Activated CD4-positive, alpha-beta memory T cell treated with anti-CD3 and anti-CD28 coated beads for 36 hours (primary cell): ENCODE measurements at regions of chr20 and their contacts with region 1.

Region 1: DNA sequence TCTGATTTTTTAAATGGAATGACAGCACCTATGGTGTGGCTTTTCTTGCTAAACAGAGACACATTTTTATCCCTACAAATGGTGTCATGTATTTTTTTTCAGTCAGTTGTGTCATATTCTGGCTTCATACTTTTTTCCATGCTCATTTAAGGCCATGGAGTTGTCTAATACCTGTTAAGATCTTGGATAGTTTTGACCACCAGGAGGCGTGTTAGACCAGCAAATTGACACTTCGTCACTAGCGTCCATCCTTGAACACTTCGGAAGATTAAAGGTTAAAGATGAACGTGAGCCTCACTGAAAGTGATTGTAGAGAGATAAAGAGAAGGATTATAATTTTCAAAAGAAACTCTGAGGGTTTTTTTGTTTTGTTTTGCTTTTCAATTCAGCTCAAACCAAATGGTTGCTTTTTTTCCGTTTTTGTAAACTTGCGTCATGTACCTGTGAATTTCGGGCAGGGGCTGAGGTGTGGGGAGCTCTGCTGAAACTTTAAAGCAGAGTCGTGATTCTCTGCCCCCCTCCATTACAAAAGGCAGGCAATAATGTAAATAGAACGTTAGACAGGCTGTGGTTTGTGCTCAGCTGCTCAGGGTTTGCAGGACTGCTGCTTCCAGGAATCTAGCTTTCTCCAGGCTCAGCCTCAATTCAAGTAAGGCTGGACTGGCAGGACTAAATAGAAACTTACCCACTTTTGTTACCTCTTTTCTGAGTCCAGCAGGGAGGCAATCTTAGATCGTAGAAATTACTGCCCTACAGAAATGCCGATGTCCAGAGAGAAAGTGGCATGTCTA is 245.1 kb downstream of the FOXA2 start:
- DNase-seq: peak; percentile 25
- H3K4me3 Mint-ChIP-seq: no peak overlapping the region
- H3K27ac Mint-ChIP-seq: no peak overlapping the region
- H3K4me1 Mint-ChIP-seq: peaks cover 2% of the 10 kb centered on the region
- H3K27me3 Mint-ChIP-seq: no peaks in the 10 kb centered on the region

Region 2: DNA sequence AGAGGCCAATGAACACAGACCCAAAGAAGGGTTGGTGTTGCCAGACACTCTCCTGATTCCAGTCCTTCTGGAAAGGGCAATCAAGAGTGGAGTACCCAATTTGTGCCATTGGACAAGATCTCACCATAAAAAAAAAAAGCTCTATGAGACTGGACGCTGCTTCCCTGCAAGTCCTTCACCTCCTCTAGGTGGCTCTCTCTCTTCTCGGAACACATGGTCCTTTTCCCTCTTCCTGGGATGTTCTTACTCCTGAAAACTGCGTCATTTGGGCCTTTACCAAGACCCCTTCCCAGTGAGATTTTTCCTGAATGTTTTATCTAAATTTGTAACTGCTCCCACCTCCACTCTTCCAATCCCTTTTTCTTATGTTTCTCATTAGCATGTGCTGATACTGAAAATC is 35.8 kb before region 1 on chr20:
- CTCF ChIA-PET with region 1: no interaction called
- POLR2A ChIA-PET with region 1: no interaction called
- intact Hi-C with region 1: no loop called
- DNase-seq: no peak
- H3K4me3 Mint-ChIP-seq: no peak overlapping the region
- H3K27ac Mint-ChIP-seq: no peak overlapping the region
- H3K4me1 Mint-ChIP-seq: no peaks in the 10 kb centered on the region
- H3K27me3 Mint-ChIP-seq: no peaks in the 10 kb centered on the region

Region 3: DNA sequence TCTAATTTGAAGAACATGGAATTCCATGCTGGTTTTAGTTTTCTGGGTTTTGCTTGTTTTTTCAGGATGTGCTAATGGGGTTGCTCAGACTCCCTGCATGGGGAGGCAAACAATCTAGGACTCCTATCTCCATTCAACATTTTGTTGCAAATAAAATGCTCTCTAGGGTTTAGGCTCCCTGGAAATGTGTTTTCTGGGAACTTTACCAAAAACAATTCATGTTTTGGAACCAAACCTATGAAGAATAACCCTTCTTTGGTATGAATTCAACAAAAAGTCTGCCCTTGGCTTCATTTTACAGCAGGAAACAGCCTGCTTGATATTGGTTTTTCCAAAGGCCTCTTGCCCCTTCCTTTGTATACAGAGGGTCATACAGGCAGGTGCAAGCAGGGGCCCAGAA is 27.3 kb after region 1 on chr20:
- CTCF ChIA-PET with region 1: no interaction called
- POLR2A ChIA-PET with region 1: no interaction called
- intact Hi-C with region 1: no loop called
- DNase-seq: no peak
- H3K4me3 Mint-ChIP-seq: no peak overlapping the region
- H3K27ac Mint-ChIP-seq: no peak overlapping the region
- H3K4me1 Mint-ChIP-seq: no peaks in the 10 kb centered on the region
- H3K27me3 Mint-ChIP-seq: no peaks in the 10 kb centered on the region

Region 4: GRCh38 chr20:22385602-22386305 is 46.5 kb after region 1 on chr20:
- CTCF ChIA-PET with region 1: no interaction called
- POLR2A ChIA-PET with region 1: no interaction called
- intact Hi-C with region 1: no loop called
- DNase-seq: no peak
- H3K4me3 Mint-ChIP-seq: no peak overlapping the region
- H3K27ac Mint-ChIP-seq: no peak overlapping the region
- H3K4me1 Mint-ChIP-seq: no peaks in the 10 kb centered on the region
- H3K27me3 Mint-ChIP-seq: no peaks in the 10 kb centered on the region

Region 5: GRCh38 chr20:22430154-22430745 is 91.0 kb after region 1 on chr20:
- CTCF ChIA-PET with region 1: no interaction called
- POLR2A ChIA-PET with region 1: no interaction called
- intact Hi-C with region 1: no loop called
- DNase-seq: no peak
- H3K4me3 Mint-ChIP-seq: no peak overlapping the region
- H3K27ac Mint-ChIP-seq: no peak overlapping the region
- H3K4me1 Mint-ChIP-seq: no peaks in the 10 kb centered on the region
- H3K27me3 Mint-ChIP-seq: no peaks in the 10 kb centered on the region

Region 6: DNA sequence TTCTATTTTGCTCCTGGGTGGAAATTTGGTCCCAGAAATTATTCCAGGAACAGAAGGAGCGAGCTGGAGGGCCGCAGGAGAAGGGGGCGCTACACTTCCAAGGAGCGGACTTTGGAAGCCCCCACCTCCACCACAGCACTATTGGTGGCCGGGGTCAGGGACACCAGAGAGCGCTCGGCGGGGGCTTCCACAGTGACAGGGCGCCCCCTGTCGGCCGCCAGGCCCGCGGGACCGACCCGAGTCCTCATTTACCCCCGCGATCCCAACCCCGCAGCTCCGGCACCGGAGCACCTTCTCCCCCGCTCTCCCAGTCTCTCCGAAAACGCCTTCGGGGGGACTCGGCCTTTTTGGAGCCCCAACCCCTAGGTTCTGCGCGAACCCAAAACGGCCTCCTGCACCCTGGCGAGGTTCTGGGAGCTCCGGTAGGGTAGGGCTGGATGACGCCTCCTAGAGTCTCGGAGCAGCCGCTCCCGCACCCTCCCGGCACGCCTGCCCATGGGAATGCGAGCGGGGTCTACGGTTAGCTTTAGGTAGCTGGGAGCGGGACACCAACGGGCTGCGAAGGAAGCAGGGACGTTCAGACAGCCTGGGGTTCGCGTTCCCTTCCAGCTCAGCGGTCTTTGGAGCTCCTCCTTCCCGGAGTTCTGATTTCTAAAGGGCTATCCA is 247.5 kb after region 1 on chr20:
- CTCF ChIA-PET with region 1: interaction called, 5 read pairs
- POLR2A ChIA-PET with region 1: no interaction called
- intact Hi-C with region 1: loop called (anchors 2 kb)
- DNase-seq: peak; percentile 13
- H3K4me3 Mint-ChIP-seq: no peak overlapping the region
- H3K27ac Mint-ChIP-seq: no peak overlapping the region
- H3K4me1 Mint-ChIP-seq: no peaks in the 10 kb centered on the region
- H3K27me3 Mint-ChIP-seq: peaks cover 40% of the 10 kb centered on the region

Region 7: DNA sequence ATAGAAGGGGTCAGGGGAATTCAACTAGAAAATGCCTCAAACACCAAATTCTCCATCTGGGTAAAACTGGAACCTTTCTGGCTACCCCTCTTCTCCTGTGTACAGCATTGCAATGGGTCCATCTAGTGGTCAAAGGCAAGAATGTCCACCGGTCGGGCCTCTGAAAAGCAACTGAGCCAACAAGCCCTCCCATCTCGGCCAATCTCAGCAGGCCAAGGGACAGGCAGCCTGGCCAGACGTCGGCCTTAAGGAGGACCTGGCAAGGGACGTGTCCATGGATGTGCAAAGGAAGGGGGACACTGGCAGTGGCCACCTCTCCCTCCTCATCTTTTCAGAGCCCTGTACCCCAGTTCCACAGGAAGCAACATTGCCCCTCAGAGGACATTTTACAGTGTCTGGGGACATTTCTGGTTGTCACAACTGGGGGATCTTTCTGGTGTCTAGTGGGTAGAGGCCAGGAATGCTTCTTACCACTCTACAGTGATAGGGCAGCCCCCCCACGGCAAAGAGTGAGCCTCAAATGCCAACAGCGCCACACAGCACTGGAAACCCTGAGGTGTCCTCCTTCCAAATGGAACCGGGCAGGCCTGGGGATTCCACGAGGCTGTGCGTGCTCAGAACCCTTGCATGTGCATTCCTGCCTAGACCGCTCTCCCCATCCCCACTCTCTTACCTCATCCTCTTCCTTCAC is 344.9 kb after region 1 on chr20:
- CTCF ChIA-PET with region 1: interaction called, 28 read pairs
- POLR2A ChIA-PET with region 1: no interaction called
- intact Hi-C with region 1: loop called (anchors 2 kb)
- DNase-seq: peak; percentile 33
- H3K4me3 Mint-ChIP-seq: no peak overlapping the region
- H3K27ac Mint-ChIP-seq: no peak overlapping the region
- H3K4me1 Mint-ChIP-seq: no peaks in the 10 kb centered on the region
- H3K27me3 Mint-ChIP-seq: no peaks in the 10 kb centered on the region